Caco-2 (cell line): ENCODE measurements at regions of chr11 and their contacts with region 1.

Region 1: GRCh38 chr11:3217676-3218482 is 734 bp downstream of the MRGPRG start:
- DNase-seq: peak in 1 of 2 experiments; percentile 29
- H3K4me3 ChIP-seq: no peak overlapping the region
- H3K4me3 Mint-ChIP-seq: no peak overlapping the region
- H3K27ac Mint-ChIP-seq: no peak overlapping the region
- H3K4me1 ChIP-seq: no peaks in the 10 kb centered on the region
- H3K4me1 Mint-ChIP-seq: no peaks in the 10 kb centered on the region
- H3K27me3 ChIP-seq: peaks cover 4% of the 10 kb centered on the region
- H3K27me3 Mint-ChIP-seq: peaks cover 44% of the 10 kb centered on the region
- CTCF ChIP-seq: no peak

Region 2: GRCh38 chr11:3037040-3037944 is 180.6 kb before region 1 on chr11:
- CTCF ChIA-PET with region 1: no interaction called
- POLR2A ChIA-PET with region 1: no interaction called
- intact Hi-C with region 1: loop called (anchors 1 kb)
- DNase-seq: peak; percentile 74 to 81
- H3K4me3 ChIP-seq: no peak overlapping the region
- H3K4me3 Mint-ChIP-seq: no peak overlapping the region
- H3K27ac Mint-ChIP-seq: no peak overlapping the region
- H3K4me1 ChIP-seq: no peaks in the 10 kb centered on the region
- H3K4me1 Mint-ChIP-seq: peaks cover 2% of the 10 kb centered on the region
- H3K27me3 ChIP-seq: no peaks in the 10 kb centered on the region
- H3K27me3 Mint-ChIP-seq: no peaks in the 10 kb centered on the region
- CTCF ChIP-seq: peak; percentile 88

Region 3: GRCh38 chr11:3137486-3138177 is 80.2 kb before region 1 on chr11:
- CTCF ChIA-PET with region 1: no interaction called
- POLR2A ChIA-PET with region 1: no interaction called
- intact Hi-C with region 1: loop called (anchors 1 kb)
- DNase-seq: no peak
- H3K4me3 ChIP-seq: no peak overlapping the region
- H3K4me3 Mint-ChIP-seq: no peak overlapping the region
- H3K27ac Mint-ChIP-seq: no peak overlapping the region
- H3K4me1 ChIP-seq: no peaks in the 10 kb centered on the region
- H3K4me1 Mint-ChIP-seq: no peaks in the 10 kb centered on the region
- H3K27me3 ChIP-seq: no peaks in the 10 kb centered on the region
- H3K27me3 Mint-ChIP-seq: no peaks in the 10 kb centered on the region
- CTCF ChIP-seq: no peak